HEK293 (cell line): ENCODE measurements at regions of chr1 and their contacts with region 1.

Region 1: GRCh38 chr1:201895913-201896807 is 7.5 kb downstream of the SHISA4 start:
- H3K4me3 ChIP-seq: no peak overlapping the region
- H3K27ac ChIP-seq: no peak overlapping the region
- H3K4me1 ChIP-seq: no peaks in the 10 kb centered on the region
- CTCF ChIP-seq: peak; percentile 97

Region 2: GRCh38 chr1:201119206-201120197 is 776.7 kb before region 1 on chr1:
- CTCF ChIA-PET with region 1: no interaction called
- POLR2A ChIA-PET with region 1: no interaction called
- H3K4me3 ChIP-seq: no peak overlapping the region
- H3K27ac ChIP-seq: no peak overlapping the region
- H3K4me1 ChIP-seq: no peaks in the 10 kb centered on the region
- CTCF ChIP-seq: peak; percentile 76

Region 3: DNA sequence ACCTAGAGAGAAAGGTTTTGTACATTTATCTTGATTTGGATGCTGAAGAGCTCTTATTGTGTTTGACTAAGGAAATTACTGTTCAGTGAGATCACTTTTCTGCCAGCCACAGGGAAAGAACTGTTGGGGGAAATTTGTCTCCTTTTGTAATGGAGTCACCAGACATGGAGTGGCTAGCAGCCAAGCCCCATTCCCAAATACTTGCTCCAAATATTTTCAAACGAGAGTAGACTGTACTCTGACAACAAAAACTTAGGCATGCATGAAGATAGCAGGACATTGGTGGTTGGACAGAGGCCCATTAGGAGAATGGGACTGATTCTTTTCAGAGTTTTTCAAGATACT is 46.1 kb before region 1 on chr1:
- CTCF ChIA-PET with region 1: no interaction called
- POLR2A ChIA-PET with region 1: no interaction called
- H3K4me3 ChIP-seq: no peak overlapping the region
- H3K27ac ChIP-seq: no peak overlapping the region
- H3K4me1 ChIP-seq: peaks cover 5% of the 10 kb centered on the region; the same call in 1 of the 2 replicates
- CTCF ChIP-seq: no peak

Region 4: GRCh38 chr1:201877877-201878401 is 18.2 kb before region 1 on chr1:
- CTCF ChIA-PET with region 1: interaction called, 99 read pairs
- POLR2A ChIA-PET with region 1: no interaction called
- H3K4me3 ChIP-seq: no peak overlapping the region
- H3K27ac ChIP-seq: no peak overlapping the region
- H3K4me1 ChIP-seq: no peaks in the 10 kb centered on the region
- CTCF ChIP-seq: peak; percentile 47; the same call in 1 of the 2 replicates

Region 5: DNA sequence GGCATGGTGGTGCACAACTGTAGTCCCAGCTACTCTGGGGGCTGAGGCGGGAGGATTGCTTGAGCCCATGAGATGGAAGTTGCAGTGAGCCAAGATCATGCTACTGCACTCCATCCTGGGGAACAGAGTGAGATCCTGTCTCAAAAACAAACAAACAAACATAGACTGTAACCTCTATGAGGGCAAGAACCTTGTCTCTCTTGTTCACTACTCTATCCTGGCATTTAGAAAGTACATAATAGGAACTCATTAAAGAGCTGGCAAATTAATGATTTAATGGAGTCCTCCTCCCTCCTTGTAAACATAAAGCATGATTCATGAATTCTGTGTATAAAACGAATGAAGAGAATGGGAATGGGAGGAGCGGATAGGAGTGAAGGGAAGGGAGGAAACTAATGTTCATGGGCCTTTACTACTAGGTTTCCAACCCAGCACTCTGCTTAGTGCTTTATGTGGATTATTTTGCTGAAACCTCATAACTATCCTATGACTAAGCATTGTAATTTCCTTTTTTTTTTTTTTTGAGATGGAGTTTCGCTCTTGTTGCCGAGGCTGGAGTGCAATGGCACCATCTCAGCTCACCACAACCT is 41.6 kb after region 1 on chr1:
- CTCF ChIA-PET with region 1: interaction called, 18 read pairs
- POLR2A ChIA-PET with region 1: no interaction called
- H3K4me3 ChIP-seq: no peak overlapping the region
- H3K27ac ChIP-seq: no peak overlapping the region
- H3K4me1 ChIP-seq: no peaks in the 10 kb centered on the region
- CTCF ChIP-seq: no peak

Region 6: DNA sequence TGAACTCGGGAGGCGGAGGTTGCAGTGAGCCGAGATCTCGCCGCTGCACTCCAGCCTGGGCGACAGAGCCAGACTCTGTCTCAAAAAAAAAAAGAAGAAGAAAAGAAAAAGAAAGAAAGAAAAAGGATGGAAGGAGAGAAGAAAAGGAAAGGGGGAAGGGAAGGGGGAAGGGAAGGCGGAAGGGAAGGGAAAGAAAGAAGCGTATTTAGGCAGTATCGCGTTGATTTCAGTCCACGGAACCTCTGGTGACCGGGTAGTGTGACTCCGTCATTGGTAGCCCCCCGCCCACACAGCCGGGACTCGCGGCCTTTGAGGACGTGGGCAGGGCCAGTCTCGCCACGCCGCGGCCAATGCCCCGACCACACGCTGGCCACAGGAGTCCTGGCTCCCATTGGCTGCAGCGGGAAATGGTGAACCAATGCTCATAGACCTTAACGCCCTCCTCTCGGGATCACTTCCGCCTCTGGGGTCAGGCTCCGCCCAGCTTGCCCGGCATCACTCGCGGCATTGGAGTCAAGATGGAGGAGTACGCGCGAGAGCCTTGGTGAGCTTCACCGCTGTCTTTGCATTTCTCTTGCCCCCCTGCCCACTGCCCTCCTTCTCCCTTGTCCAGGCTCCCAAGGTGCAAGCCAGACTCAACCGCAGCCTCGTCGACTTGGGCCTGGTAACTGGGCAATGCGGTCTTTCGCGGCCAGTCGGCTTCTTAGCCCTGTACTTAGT is 59.0 kb after region 1 on chr1 and contains the start of gene TIMM17A:
- CTCF ChIA-PET with region 1: interaction called, 20 read pairs
- POLR2A ChIA-PET with region 1: interaction called, 8 read pairs
- H3K4me3 ChIP-seq: peak within 1 kb of the TSS; percentile 79
- H3K27ac ChIP-seq: peak within 1 kb of the TSS; percentile 41; the same call in 1 of the 2 replicates
- H3K4me1 ChIP-seq: no peaks in the 10 kb centered on the region
- CTCF ChIP-seq: no peak

Region 7: DNA sequence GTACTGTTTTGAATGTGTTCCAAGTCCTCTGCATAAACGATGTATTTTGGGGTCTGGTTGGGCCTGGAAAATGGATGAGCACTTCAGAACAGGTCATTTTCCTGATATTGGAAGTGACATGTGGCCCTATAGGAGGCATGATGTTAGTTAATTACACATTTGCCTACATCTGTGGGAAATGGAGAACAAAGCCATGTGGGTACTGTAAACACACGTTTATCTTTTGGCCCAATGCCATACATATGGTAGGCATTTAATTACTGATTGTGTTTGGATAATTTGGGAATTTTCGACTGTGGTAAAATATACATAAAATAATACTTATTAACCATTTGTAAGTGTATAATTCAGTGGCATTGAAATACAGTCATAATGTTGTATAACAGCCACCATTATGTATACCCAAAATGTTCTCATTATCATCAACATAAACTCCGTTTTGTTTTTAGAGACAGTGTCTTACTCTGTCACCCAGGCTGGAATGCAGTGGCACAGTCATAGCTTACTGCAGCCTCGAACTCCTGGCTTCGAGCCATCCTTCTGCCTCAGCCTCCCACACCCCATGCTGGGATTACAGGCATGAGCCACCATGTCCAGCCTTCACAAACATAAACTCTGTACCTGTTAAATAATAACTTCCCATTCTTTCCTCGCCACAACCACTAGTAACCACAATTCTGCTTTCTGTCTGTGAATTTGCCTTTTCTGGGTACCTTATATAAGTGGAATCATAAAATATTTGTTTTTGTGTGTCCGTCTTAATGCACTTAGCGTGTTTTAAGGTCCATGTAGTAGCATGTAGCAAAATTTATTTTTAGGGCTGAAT is 74.4 kb after region 1 on chr1:
- CTCF ChIA-PET with region 1: interaction called, 204 read pairs
- POLR2A ChIA-PET with region 1: interaction called, 9 read pairs
- H3K4me3 ChIP-seq: no peak overlapping the region
- H3K27ac ChIP-seq: no peak overlapping the region
- H3K4me1 ChIP-seq: peaks cover 13% of the 10 kb centered on the region
- CTCF ChIP-seq: no peak

Region 8: DNA sequence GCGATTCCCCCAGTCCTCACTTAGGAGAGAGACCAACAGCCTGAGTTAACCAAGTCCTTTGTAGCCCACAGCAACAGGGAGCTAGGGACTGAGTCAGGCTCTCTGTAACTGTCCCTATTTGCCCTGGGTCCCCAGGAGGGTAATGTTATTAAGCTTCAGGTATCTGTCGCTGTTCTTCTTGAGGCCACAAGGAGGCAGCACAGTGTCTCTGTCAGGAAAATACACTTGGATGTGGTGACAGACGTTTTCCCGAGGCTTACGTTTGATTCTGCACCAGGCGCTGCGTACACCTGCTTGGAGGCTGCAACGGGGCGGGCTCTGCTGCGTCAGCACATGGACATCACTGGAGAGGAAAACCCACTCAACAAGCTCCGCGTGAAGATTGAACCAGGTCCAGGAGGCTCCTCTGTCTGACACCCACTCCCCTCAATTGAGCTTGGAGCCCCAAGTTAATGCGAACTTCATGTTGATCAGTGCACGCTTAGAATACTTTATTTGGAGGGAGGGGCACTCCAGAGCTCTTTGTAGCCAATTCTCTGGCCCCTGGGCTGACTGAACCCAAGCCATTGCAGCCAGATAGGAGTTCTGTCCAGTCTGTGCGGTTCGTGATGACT is 103.6 kb after region 1 on chr1:
- CTCF ChIA-PET with region 1: interaction called, 36 read pairs
- POLR2A ChIA-PET with region 1: no interaction called
- H3K4me3 ChIP-seq: no peak overlapping the region
- H3K27ac ChIP-seq: no peak overlapping the region
- H3K4me1 ChIP-seq: no peaks in the 10 kb centered on the region
- CTCF ChIP-seq: peak; percentile 53

Region 9: DNA sequence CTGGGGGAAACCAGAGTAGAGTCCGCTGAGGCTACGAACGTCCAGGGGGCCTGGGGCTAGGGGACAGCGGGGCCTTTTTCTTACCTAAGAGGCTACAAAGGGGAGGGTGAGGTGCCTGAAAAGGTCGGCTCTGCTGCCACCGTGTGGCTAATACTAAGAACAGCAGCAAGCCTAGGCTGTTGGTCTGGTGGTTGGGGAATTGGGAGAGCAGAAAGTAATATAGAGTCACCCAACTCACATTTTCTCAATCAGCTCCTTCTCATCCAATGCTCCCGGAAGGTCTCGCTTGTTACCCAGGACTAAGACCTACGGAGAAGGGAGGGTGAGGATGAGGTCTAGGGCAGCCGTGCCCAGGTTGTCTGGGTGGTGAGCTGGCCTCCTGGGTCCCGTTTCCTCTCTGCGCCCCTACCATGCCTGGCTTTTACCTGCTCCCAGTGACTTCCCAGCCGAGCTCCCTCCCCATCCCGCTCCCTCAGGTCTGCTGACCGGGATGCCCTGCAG is 239.1 kb after region 1 on chr1:
- CTCF ChIA-PET with region 1: interaction called, 14 read pairs
- POLR2A ChIA-PET with region 1: no interaction called
- H3K4me3 ChIP-seq: no peak overlapping the region
- H3K27ac ChIP-seq: no peak overlapping the region
- H3K4me1 ChIP-seq: no peaks in the 10 kb centered on the region
- CTCF ChIP-seq: 0 out of 2 replicates have a peak, but pooled peaks have one; percentile 39